ENCODE measurements at regions of chr1 and their contacts with region 1.

Region 1: DNA sequence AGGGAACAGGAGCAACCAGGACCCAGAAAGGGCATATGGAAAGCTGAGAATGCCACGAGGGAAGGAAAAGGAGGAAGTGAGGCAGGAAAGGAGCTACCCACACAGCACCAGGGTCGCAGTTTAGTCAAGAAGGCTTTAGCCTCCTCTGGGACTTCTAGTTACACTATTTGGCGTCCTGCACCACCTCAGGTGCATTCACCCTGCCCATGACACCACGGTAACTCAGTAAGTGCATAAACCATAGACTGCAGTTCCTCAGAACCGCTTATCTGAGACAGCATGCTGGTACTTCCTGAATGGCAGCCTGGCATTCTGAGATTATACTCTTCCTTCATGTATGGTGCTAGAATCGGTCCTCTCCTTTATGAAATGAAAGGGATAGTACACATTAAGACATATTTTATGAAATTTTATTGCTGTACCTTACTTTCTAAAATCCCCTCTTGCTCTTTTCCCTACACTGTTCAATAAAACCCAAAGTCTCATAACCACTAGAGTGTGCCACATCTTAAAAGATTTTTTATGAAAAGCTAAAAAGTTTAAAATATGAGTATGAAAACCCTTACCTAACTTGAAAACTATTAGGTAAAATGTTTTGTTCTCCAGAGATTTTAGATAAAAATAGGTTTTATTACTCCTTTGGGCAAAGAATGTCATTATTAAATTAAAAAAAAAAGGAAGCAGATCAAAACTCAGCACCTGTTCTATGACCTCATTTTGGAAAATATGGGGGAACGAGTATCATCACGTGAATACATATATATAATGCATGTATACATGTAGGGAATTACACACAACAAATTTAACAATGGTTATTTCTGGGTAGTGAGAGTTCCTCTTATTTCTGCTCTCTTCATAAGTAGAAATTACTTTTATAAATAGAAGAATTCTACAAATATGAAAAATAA is 67.3 kb downstream of the VAV3 start:
- DNase-seq: peak; percentile 84
- H3K4me3 ChIP-seq: peak overlapping the region; percentile 39
- H3K27ac ChIP-seq: peak overlapping the region; percentile 89
- H3K4me1 ChIP-seq: peaks cover 74% of the 10 kb centered on the region
- CTCF ChIP-seq: peak; percentile 71

Region 2: DNA sequence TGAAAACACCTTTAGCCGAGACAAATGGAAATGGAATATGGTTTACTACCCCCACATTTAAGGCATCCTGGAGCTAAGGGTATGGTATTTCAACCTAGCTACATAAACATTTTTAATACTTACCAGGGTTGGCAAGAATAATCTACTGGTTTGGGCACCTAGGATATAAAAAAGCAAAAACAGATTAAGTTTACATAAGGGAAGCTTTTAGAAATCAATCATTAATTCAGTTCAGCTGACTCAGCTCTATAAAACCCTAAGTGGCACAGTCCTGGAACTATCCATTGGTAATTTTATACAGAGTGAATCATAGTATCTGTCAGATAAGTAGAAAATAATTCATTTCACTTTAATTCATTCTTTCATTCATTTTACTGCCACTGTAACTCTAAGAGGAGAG is 287.9 kb before region 1 on chr1:
- CTCF ChIA-PET with region 1: no interaction called
- POLR2A ChIA-PET with region 1: no interaction called
- intact Hi-C with region 1: no loop called
- DNase-seq: no peak
- H3K4me3 ChIP-seq: no peak overlapping the region
- H3K27ac ChIP-seq: no peak overlapping the region
- H3K4me1 ChIP-seq: peaks cover 4% of the 10 kb centered on the region
- CTCF ChIP-seq: no peak

Region 3: DNA sequence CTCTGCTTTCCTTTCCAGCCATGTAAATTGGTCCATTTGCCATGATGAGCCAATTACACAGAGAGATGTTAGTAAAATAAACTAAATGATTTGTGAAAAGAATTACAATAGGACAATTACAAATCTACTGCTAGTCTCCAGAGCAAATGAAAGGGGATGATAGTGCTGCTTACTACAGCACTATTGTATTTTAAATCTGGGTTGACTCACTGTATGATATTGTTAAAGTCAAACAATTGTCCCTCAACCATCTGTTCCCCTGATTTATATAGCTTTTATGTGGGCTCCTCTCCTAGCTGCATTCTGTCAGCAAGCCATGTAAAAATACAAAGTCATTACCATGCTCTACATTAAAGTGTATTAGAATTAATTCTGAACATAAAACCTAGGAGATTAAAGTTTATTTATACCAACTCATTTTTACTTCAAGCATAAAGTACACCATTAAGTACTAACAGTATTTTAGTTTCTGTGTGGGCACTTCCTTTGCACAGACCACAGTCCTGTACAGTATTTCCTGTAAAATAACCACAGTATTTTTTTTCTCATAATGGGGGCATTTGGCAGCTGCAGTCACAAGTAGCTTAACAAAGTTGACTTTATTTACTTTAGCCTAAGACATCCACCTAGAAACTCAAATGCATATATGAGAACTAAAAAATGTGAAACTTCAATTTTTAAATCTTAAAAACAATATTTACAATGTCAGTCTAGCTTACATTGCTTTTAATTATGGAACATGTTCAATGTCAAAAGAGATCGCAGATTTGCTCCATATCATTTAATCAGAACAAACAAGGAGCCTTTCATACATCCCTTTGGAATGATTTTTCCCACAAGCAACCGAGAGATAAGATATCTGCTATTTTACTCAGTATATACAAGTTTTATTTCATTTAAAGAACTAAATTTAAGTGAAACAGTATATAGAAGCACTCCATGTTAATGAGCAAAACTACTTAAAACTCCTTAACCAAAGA is 68.3 kb before region 1 on chr1:
- CTCF ChIA-PET with region 1: no interaction called
- POLR2A ChIA-PET with region 1: interaction called, 3 read pairs
- intact Hi-C with region 1: loop called (anchors 2 kb)
- DNase-seq: peak; percentile 73
- H3K4me3 ChIP-seq: peak overlapping the region; percentile 22
- H3K27ac ChIP-seq: peak overlapping the region; percentile 57
- H3K4me1 ChIP-seq: peaks cover 26% of the 10 kb centered on the region
- CTCF ChIP-seq: no peak

Region 4: GRCh38 chr1:107840725-107841124 is 57.0 kb before region 1 on chr1:
- CTCF ChIA-PET with region 1: no interaction called
- POLR2A ChIA-PET with region 1: interaction called, 3 read pairs
- intact Hi-C with region 1: loop called (anchors 5 kb)
- DNase-seq: peak; percentile 41
- H3K4me3 ChIP-seq: no peak overlapping the region
- H3K27ac ChIP-seq: no peak overlapping the region
- H3K4me1 ChIP-seq: peaks cover 49% of the 10 kb centered on the region
- CTCF ChIP-seq: no peak

Region 5: DNA sequence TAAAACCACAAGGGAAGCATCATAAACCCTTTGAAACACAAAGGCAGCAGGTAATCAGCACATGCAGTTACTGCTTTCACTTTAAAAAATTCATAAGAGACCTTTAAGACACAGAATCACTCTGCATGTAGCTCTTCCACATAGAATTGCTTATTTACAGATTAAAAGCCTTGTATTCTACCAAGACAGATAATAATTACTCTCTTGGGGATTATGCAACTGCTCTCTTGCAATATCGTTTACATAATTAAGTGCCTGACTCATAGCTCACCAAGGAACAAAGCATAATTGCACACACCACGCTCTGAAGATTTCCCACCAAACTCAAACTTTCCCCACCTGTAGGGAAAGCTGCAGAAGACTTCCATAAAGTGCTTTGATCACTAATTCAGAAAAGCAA is 20.6 kb before region 1 on chr1:
- CTCF ChIA-PET with region 1: no interaction called
- POLR2A ChIA-PET with region 1: interaction called, 10 read pairs
- intact Hi-C with region 1: no loop called
- DNase-seq: no peak
- H3K4me3 ChIP-seq: peak overlapping the region; percentile 38
- H3K27ac ChIP-seq: no peak overlapping the region
- H3K4me1 ChIP-seq: peaks cover 47% of the 10 kb centered on the region
- CTCF ChIP-seq: no peak

Region 6: GRCh38 chr1:107936498-107937481 is 39.1 kb after region 1 on chr1:
- CTCF ChIA-PET with region 1: no interaction called
- POLR2A ChIA-PET with region 1: interaction called, 4 read pairs
- intact Hi-C with region 1: loop called (anchors 5 kb)
- DNase-seq: peak; percentile 38
- H3K4me3 ChIP-seq: peak overlapping the region; percentile 5
- H3K27ac ChIP-seq: no peak overlapping the region
- H3K4me1 ChIP-seq: peaks cover 44% of the 10 kb centered on the region
- CTCF ChIP-seq: 0 out of 2 replicates have a peak, but pooled peaks have one; percentile 21

Region 7: GRCh38 chr1:107963601-107964335 is 66.1 kb after region 1 on chr1:
- CTCF ChIA-PET with region 1: no interaction called
- POLR2A ChIA-PET with region 1: interaction called, 6 read pairs
- intact Hi-C with region 1: loop called (anchors 1 kb)
- DNase-seq: peak; percentile 70
- H3K4me3 ChIP-seq: peak overlapping the region; percentile 73
- H3K27ac ChIP-seq: peak overlapping the region; percentile 25
- H3K4me1 ChIP-seq: peaks cover 11% of the 10 kb centered on the region
- CTCF ChIP-seq: no peak

Region 8: GRCh38 chr1:108125312-108126138 is 227.8 kb after region 1 on chr1:
- CTCF ChIA-PET with region 1: no interaction called
- POLR2A ChIA-PET with region 1: no interaction called
- intact Hi-C with region 1: loop called (anchors 5 kb)
- DNase-seq: peak; percentile 77
- H3K4me3 ChIP-seq: no peak overlapping the region
- H3K27ac ChIP-seq: no peak overlapping the region
- H3K4me1 ChIP-seq: peaks cover 6% of the 10 kb centered on the region
- CTCF ChIP-seq: peak; percentile 91